A673 (cell line): ENCODE measurements at regions of chr18 and their contacts with region 1.

Region 1: GRCh38 chr18:36203360-36203895 is 16.1 kb downstream of the MOCOS start:
- DNase-seq: no peak
- H3K4me3 ChIP-seq: no peak overlapping the region
- H3K27ac ChIP-seq: no peak overlapping the region
- H3K4me1 ChIP-seq: no peaks in the 10 kb centered on the region
- H3K27me3 ChIP-seq: no peaks in the 10 kb centered on the region
- CTCF ChIP-seq: no peak

Region 2: GRCh38 chr18:36083729-36084128 is 119.7 kb before region 1 on chr18:
- CTCF ChIA-PET with region 1: no interaction called
- POLR2A ChIA-PET with region 1: no interaction called
- intact Hi-C with region 1: no loop called
- DNase-seq: no peak
- H3K4me3 ChIP-seq: no peak overlapping the region
- H3K27ac ChIP-seq: no peak overlapping the region
- H3K4me1 ChIP-seq: no peaks in the 10 kb centered on the region
- H3K27me3 ChIP-seq: no peaks in the 10 kb centered on the region
- CTCF ChIP-seq: no peak

Region 3: DNA sequence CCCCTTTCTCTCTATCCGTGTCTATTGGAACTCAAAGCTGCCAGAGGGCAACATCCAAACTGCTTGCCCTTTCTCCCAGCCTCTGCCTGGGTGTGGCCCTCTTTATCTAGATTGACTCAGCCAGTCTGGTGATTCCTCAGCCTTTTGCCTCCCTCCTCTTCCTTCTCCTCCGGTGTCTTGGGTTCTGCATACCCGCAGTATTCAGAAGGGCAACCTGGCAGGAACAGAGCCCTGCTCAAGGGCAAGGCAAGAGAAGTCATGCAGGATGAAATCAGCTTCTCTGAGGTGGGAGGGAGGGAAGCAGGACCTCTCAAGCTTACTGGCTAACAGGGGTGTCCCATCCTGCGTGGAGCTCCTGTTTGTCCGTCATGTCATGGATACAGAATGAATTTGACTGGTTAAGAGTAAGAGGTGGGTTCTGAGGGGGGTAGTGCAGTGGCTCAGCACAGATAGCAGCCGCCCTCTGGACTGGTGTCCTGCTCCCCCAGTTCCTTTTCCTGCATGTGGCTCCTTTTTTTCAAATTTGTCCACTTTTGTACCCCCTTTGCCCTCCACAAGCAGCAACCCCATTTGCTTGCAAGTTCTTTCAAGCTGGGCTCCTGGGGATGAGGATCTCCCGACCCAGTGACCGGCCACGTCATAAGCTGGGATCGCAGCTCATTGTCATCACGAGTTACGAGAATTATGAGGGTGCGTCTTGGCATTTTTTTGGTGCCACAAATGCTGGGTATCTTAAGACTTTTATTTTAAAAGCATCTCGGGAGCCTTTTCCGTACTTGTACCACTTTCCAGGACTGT is 248.2 kb after region 1 on chr18:
- CTCF ChIA-PET with region 1: no interaction called
- POLR2A ChIA-PET with region 1: no interaction called
- intact Hi-C with region 1: no loop called
- DNase-seq: no peak
- H3K4me3 ChIP-seq: no peak overlapping the region
- H3K27ac ChIP-seq: no peak overlapping the region
- H3K4me1 ChIP-seq: no peaks in the 10 kb centered on the region
- H3K27me3 ChIP-seq: peaks cover 22% of the 10 kb centered on the region
- CTCF ChIP-seq: no peak

Region 4: DNA sequence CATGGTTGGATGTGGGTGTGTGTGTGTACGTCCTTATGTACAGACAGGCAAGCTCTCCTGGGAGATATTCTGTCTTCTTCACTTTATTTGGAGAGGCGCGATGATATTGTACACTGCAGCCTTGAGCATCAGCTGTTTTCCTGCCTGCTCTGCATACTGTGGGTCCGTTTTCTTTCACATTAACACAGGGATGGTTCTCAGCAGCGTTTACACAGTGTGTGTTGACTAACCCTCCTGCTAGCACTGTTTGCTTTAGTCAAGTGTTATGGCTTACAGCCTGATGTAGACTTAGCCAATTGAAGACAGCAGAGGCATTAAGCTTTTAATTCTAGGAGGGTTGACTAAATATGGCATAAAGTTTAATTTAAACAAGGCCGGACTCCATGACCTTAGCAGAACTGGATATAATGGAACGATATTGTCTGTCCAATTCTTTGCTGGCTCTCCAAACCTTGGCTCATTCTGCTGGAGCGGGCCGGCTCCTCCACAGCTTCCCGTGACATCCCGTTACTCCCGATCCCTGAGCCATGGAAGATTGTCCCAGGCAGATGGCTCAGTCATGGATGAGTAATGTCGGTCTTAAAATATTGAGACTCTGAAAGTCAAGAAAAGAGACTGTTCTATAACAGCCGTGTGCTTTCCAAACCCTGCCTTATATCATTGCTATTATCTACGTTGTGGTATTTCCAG is 490.6 kb after region 1 on chr18:
- CTCF ChIA-PET with region 1: no interaction called
- POLR2A ChIA-PET with region 1: no interaction called
- intact Hi-C with region 1: loop called (anchors 10 kb)
- DNase-seq: no peak
- H3K4me3 ChIP-seq: no peak overlapping the region
- H3K27ac ChIP-seq: no peak overlapping the region
- H3K4me1 ChIP-seq: no peaks in the 10 kb centered on the region
- H3K27me3 ChIP-seq: peaks cover 56% of the 10 kb centered on the region
- CTCF ChIP-seq: no peak